ENCODE measurements at regions of chrX and their contacts with region 1.

Region 1: DNA sequence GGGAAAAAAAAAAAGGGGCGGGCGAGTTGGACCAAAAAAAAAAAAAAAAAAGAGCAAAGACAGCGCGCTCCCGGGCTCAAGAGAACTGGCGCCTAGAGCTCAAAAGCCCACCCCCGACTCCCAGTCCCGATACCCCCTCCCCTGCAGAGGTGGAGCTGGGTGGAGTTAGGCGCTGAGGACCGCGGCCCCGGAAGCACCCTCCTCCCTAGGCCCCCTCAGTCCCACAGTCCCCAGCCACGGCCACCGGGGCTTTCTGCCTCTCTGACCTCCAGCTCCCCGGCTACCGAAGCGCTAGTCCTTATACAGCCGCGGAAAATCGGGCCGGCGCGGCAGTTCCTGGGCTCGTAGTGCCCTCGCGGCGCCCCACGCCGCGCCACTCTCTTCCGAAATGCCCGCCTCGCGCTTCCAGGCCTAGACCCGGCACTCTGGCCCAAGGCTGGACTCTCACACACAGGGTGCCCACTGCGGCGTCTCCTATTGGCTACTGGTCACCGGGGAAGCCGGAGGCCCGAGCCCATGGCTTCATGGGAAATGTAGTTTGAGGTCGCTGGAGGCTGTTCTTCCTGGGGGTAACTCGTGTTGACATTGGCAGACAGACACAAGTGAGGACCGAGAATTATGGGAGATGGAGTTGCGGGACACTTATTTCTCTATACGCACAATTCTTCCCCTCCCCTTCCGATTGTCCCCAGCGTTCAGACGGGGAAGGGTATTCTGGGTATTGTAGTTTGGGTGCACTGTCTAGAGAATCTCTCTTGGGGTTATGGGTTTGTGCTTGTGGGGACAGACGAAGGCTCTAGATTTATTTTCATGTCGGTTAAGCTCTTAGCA is at the start of gene ENOX2:
- ATAC-seq: peak; percentile 97 to 99 (median 98)
- H3K4me3 ChIP-seq: peak within 1 kb of the TSS; percentile 47 to 88 (median 64)
- H3K27ac ChIP-seq: peak within 1 kb of the TSS; percentile 92 to 93
- H3K4me1 ChIP-seq: peaks cover 0 to 9% of the 10 kb centered on the region in 2 donors
- total RNA-seq, gene ENOX2: 7.9 to 34.8 (median 12.7) TPM

Region 2: DNA sequence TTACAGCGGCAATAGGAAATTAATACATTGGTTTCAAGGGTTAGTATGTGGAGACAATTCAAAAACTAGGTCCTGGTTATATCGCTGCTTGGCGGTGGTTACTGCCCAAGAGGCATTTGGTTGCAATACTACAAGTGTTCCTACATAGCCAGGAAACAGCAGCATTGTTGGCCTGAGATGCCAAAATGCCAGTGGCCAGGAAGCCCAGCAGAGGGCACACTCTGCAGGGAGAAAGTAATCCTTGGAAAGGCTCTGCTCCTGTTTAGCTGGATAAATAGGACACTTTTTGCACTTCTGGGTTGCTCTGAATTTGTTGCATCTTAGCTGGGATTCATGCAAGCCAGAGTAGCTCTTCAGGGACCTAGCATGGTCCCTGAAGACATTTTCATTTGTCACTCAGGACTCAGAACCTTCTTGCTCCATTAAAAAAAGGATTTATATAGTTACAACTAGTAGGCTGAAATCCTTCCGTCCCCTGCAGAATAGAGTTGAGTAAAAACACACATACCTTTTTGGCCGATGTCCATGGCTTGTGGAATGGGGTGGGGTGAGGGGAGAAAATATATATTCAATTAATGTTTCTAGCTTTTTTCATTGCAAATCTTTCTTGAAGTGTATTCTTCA is 509.4 kb before region 1 on chrX:
- in situ Hi-C with region 1: loop called in 4 of 9 experiments (anchors 25 kb)
- ATAC-seq: peak in 7 of 8 experiments; percentile 48 to 84 (median 62)
- H3K4me3 ChIP-seq: no peak overlapping the region
- H3K27ac ChIP-seq: no peak overlapping the region
- H3K4me1 ChIP-seq: no peaks in the 10 kb centered on the region

Region 3: GRCh38 chrX:130539721-130540321 is 363.2 kb before region 1 on chrX:
- in situ Hi-C with region 1: loop called in 2 of 9 experiments (anchors 25 kb)
- ATAC-seq: peak in 6 of 8 experiments; percentile 23 to 55 (median 45)
- H3K4me3 ChIP-seq: no peak overlapping the region
- H3K27ac ChIP-seq: no peak overlapping the region
- H3K4me1 ChIP-seq: no peaks in the 10 kb centered on the region

Region 4: DNA sequence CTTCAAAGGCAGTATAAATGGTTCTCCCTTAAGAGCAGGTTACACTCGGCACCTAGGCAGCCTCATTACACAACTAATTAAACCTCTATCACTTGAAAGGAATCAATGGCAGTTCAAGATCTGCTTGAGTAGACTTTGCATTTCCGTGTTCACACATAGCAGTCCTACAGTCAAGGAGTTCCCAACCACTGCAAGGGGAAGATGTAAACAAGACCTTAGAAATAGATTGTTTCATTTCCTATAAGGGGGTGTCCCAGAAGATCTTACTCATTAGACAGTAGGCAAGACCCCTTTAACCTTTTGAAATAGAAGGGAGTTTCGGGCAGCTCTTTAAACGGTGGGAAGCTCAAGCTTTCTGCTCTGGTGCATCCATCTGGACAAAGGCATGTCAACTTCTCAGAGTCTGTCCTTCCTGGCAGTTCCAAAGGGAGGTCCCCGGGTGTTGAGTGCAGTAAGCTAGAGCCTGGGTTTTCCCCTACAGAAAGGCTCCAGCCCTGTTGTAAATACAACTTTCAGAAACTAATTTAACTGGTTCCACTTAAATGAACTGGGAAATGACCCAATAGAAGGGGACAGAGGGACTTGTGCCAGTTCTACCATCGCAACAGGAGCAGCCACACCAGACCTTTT is 350.4 kb before region 1 on chrX:
- in situ Hi-C with region 1: loop called in 3 of 9 experiments (anchors 25 kb)
- ATAC-seq: peak in 1 of 8 experiments; percentile 35
- H3K4me3 ChIP-seq: no peak overlapping the region
- H3K27ac ChIP-seq: no peak overlapping the region
- H3K4me1 ChIP-seq: no peaks in the 10 kb centered on the region

Region 5: DNA sequence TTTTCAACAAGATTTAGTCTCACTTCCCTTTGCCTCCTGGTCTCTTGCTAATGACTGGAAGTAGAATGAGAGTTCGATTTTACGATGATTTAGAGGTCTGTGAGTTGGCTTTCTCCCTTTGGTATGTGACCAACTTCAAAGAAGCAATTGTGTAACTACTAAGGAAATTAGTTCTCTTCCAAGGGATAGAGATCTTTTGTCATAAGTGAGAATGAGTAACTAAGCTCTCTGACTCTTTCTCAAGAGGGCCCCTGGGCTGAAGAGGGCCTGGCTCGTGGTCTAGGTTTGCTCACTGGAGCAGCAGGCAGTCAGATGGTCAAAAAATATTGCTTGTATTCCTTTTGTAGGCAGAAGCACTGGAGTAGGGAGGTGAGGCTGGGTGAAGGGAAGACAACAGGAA is 176.3 kb before region 1 on chrX:
- in situ Hi-C with region 1: loop called in 1 of 9 experiments (anchors 25 kb)
- ATAC-seq: peak in 2 of 8 experiments; percentile 34 to 36
- H3K4me3 ChIP-seq: no peak overlapping the region
- H3K27ac ChIP-seq: no peak overlapping the region
- H3K4me1 ChIP-seq: peaks cover 0 to 18% of the 10 kb centered on the region in 2 donors

Region 6: DNA sequence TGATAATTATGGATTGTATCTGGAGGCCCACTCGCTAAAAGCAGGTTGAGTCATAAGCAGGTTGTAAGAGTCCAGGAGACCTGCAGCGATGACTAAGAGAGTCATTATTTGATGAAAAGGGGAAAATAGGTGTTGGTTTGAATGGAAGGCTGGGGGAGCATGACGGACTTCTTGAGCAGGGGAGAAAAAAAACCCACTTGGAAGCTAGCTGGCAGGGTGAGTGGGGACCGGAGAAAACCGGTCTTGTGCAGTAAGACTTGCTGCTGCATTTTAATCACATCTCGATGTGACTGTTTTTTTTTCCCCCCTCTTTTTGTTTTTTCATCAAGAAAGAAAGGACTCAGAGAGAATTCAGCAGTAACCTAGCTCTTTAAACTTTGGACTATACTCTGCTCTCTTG is 296.1 kb after region 1 on chrX:
- in situ Hi-C with region 1: no loop called
- ATAC-seq: peak in 5 of 8 experiments; percentile 76 to 82 (median 81)
- H3K4me3 ChIP-seq: no peak overlapping the region
- H3K27ac ChIP-seq: no peak overlapping the region
- H3K4me1 ChIP-seq: peaks cover 0 to 3% of the 10 kb centered on the region in 2 donors

Region 7: GRCh38 chrX:131277547-131278136 is 374.6 kb after region 1 on chrX:
- in situ Hi-C with region 1: no loop called
- ATAC-seq: no peak
- H3K4me3 ChIP-seq: no peak overlapping the region
- H3K27ac ChIP-seq: no peak overlapping the region
- H3K4me1 ChIP-seq: no peaks in the 10 kb centered on the region

Region 8: DNA sequence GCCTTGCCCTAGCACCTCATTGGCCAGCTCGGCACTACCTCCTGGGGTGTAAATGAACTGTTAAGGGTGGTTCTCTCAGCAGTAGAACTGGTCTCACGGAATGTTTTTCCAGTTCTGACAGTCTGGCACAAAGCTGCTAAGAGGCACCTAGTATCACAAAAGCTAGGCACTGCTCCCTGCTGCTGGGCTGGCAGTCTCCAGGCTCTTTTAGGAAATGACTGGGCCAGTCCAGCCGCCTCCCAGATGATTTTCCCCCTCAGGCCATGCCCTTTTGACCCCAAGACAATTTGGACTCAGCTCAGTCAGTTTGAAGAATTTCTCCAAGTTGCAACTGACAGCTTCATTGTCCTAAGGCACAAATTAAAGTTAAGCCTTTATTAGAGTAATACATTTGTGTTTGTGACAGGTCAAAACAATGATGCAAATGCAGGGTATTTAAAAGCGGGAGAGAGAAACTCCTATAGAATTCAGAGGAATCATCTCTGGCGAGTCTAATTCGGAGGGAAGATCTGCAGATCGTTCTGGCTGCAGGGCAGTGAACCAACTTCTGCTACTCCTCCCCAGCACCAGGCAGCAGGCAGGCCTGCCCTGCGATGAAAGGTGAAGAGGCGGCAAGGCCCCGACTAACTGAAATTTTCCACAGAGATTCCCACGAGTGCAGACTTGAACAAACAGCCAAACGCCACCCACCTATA is 1217.0 kb after region 1 on chrX:
- in situ Hi-C with region 1: no loop called
- ATAC-seq: peak in 7 of 8 experiments; percentile 20 to 74 (median 42)
- H3K4me3 ChIP-seq: no peak overlapping the region
- H3K27ac ChIP-seq: no peak overlapping the region
- H3K4me1 ChIP-seq: peaks cover 4 to 11% of the 10 kb centered on the region in 2 donors

Measured in motor neuron (in vitro differentiated cells).